OCI-LY7 (cell line): ENCODE measurements at regions of chr13 and their contacts with region 1.

Region 1: DNA sequence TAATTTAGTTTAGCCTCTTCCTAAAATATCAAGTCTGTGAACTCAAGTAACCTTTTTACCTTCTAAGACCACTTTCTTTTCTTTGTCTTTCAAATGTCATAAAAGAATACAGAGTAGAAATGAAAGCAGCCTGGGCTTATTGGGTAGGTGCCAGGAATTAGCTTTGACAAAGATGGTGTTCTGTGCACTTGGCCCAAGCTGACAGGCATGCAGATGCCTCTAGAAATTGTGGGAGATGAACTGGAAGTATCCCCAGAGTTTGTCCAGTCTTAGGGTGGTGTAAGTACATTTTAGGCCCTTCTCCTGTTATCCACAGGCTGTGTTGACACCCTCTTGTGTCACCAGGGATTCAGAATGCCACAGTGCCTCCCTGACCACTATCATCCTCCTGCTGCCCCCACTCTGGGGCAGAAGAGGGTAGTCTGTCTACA is 343.0 kb downstream of the KCNRG start:
- DNase-seq: no peak
- H3K4me3 ChIP-seq: no peak overlapping the region
- H3K27ac ChIP-seq: no peak overlapping the region
- H3K4me1 ChIP-seq: peaks cover 38% of the 10 kb centered on the region
- CTCF ChIP-seq: no peak

Region 2: GRCh38 chr13:50376895-50377575 is 18.8 kb after region 1 on chr13:
- CTCF ChIA-PET with region 1: no interaction called
- POLR2A ChIA-PET with region 1: interaction called, 10 read pairs
- intact Hi-C with region 1: no loop called
- DNase-seq: no peak
- H3K4me3 ChIP-seq: no peak overlapping the region
- H3K27ac ChIP-seq: no peak overlapping the region
- H3K4me1 ChIP-seq: peaks cover 42% of the 10 kb centered on the region
- CTCF ChIP-seq: peak; percentile 42; the same call in 1 of the 2 replicates

Region 3: DNA sequence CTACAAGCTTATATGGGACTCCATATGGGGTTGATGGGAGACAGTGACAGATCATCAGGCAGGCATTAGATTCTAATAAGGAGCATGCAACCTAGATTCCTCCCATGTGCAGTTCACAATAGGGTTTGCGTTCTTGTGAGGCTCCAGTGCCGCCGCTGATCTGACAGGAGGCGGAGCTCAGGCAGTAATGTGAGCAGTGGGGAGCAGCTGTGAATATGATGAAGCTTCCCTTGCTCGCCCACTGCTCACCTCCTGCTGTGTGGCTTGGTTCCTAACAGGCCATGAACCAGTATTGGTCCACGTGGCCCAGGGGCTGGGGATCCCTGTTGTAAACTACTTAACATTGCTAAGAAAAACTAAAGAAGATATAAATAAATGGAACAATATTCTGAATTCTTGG is 35.4 kb after region 1 on chr13:
- CTCF ChIA-PET with region 1: no interaction called
- POLR2A ChIA-PET with region 1: no interaction called
- intact Hi-C with region 1: no loop called
- DNase-seq: no peak
- H3K4me3 ChIP-seq: no peak overlapping the region
- H3K27ac ChIP-seq: no peak overlapping the region
- H3K4me1 ChIP-seq: no peaks in the 10 kb centered on the region
- CTCF ChIP-seq: no peak

Region 4: GRCh38 chr13:51394724-51395123 is 1036.5 kb after region 1 on chr13:
- CTCF ChIA-PET with region 1: no interaction called
- POLR2A ChIA-PET with region 1: no interaction called
- intact Hi-C with region 1: no loop called
- DNase-seq: no peak
- H3K4me3 ChIP-seq: no peak overlapping the region
- H3K27ac ChIP-seq: no peak overlapping the region
- H3K4me1 ChIP-seq: peaks cover 16% of the 10 kb centered on the region
- CTCF ChIP-seq: no peak